Esophagus muscularis mucosa (tissue), 4 donors: ENCODE measurements at regions of chr1 and their contacts with region 1.

Region 1: DNA sequence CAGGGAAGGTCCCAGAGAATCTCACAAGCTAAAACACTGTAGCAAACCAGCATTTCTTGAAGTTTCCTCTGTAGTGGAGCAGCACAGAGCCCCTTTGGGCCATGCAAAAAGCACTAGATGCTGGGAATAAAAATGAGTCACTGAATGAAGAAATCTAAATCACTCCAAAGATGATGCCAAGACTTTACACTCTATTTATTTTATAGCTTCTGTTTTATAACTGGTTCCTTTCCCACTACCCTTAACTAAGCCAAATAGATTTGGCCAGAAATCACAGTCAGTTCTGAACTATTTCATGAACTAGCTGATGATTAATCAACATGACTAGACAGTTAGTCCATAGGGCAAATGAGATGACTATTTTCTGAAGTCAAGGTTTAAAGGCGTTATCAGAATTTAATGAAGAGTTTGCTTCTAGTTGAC is 89.5 kb downstream of the SCMH1 start:
- DNase-seq: no peak
- H3K4me3 ChIP-seq: no peak overlapping the region
- H3K27ac ChIP-seq: peak overlapping the region; percentile 72 to 87 (median 80)
- H3K4me1 ChIP-seq: peaks cover 20 to 55% (median 37%) of the 10 kb centered on the region in 4 donors
- H3K27me3 ChIP-seq: no peaks in the 10 kb centered on the region
- CTCF ChIP-seq: no peak
- EP300 ChIP-seq: no peak
- POLR2A ChIP-seq: no peak

Region 2: DNA sequence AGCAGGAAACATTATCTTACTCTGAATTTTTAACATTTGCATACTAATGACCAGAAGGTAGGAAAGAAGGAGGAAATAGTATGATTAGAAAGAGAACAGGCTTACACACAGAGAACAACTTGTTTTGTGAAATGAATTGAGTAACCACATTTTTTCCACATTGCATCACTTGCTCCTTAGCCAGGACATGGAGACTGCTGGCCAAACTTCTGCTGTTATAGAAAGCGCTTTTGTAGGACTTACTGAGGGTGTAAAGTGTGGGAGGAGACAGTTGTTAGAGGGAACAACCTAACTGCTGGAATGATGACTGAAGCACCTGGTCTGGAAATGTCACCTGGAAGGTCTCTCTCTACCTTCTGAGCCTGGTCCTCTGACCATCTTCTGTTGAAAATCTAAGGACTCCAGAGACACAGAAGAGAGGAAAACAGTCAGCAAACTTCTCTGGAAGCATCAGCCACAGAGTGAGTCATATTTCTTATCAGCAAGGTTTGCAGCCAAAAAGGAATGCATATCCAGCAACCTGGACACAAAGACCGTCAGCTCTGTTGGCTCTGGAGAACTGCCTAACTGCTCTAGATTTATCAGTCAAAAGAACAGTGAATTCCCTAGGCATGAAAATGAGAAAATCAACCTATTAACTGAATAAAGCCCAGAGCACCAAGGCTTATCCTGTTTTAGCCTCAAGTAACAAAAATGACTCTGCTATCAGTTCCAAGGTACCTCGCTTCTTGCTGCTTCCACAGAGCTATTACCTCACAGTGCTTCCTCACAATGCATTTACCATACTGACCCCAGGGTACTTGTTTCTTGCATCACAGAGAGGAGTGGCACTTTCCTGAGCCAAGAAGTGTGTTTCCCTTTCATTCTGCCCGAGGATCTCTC is 43.1 kb before region 1 on chr1:
- intact Hi-C with region 1: loop called (anchors 5 kb)
- DNase-seq: peak; percentile 93
- H3K4me3 ChIP-seq: peak overlapping the region in 2 of 4 donors; percentile 12 to 16
- H3K27ac ChIP-seq: peak overlapping the region; percentile 81 to 94 (median 90)
- H3K4me1 ChIP-seq: peaks cover 14 to 43% (median 42%) of the 10 kb centered on the region in 4 donors
- H3K27me3 ChIP-seq: no peaks in the 10 kb centered on the region
- CTCF ChIP-seq: no peak
- EP300 ChIP-seq: peak; percentile 16
- POLR2A ChIP-seq: no peak

Region 3: GRCh38 chr1:41122851-41123507 is 29.7 kb before region 1 on chr1:
- intact Hi-C with region 1: no loop called
- DNase-seq: no peak
- H3K4me3 ChIP-seq: no peak overlapping the region
- H3K27ac ChIP-seq: no peak overlapping the region
- H3K4me1 ChIP-seq: no peaks in the 10 kb centered on the region
- H3K27me3 ChIP-seq: no peaks in the 10 kb centered on the region
- CTCF ChIP-seq: peak; percentile 22 to 53 (median 34)
- EP300 ChIP-seq: no peak
- POLR2A ChIP-seq: no peak

Region 4: DNA sequence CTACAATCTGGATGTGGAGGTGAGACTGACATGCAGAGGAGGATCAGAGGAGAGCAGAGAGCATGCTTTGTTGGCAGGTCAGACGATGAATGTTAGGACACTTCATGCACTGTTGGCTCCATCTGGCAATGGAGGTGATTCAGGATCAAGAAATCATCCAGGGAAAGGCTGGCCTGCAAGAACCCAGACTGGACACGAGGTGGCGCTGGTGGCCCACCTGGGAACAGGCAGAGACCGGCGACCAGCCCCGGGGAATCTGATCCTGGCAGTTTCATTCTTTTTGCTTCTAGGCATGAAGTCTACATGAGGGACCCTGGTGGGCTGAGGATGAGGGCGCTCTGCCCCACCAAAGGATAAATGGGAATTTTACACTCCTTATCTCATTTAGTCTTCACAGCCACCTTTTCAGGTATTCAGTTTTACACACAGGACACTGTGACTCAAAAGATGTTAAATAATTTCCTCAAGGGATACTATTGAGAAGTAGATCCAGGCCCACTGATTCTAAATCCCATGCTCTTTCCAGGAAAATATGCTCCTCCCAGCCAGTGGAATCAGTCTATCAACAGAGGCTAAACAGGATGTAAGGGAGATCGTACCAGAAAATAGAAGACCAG is 115.6 kb after region 1 on chr1:
- intact Hi-C with region 1: no loop called
- DNase-seq: no peak
- H3K4me3 ChIP-seq: no peak overlapping the region
- H3K27ac ChIP-seq: no peak overlapping the region
- H3K4me1 ChIP-seq: peaks cover 0 to 6% (median 3%) of the 10 kb centered on the region in 4 donors
- H3K27me3 ChIP-seq: no peaks in the 10 kb centered on the region
- CTCF ChIP-seq: peak; percentile 99 to 100 (median 99)
- EP300 ChIP-seq: no peak
- POLR2A ChIP-seq: no peak

Region 5: DNA sequence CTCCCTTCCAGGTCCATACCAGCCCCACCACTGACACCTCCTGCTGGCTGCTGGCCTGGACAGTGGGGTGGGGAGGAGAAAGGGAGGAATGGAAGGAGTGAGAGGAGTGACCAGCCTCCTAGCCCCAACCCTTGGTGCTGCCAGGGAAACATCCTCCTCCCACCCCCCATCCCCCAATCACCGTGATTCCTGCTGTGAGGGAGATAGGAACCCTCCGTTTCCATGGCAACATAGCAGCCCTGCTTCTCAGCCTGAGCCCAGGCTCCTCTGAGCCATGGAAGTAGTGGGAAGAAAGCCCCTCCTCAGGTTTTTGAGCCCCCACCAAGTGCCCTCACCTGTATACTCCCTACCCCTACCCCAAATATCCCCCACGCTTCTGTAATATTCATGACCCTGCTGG is 133.9 kb after region 1 on chr1:
- intact Hi-C with region 1: no loop called
- DNase-seq: no peak
- H3K4me3 ChIP-seq: no peak overlapping the region
- H3K27ac ChIP-seq: no peak overlapping the region
- H3K4me1 ChIP-seq: peaks cover 0 to 23% (median 11%) of the 10 kb centered on the region in 4 donors
- H3K27me3 ChIP-seq: peaks cover 0 to 31% (median 0%) of the 10 kb centered on the region in 4 donors
- CTCF ChIP-seq: no peak
- EP300 ChIP-seq: no peak
- POLR2A ChIP-seq: no peak